H1 (cell line): ENCODE measurements at regions of chr14 and their contacts with region 1.

Region 1: GRCh38 chr14:67666750-67667449 is 7.5 kb downstream of the VTI1B start:
- DNase-seq: no peak
- H3K4me3 ChIP-seq: no peak overlapping the region
- H3K27ac ChIP-seq: no peak overlapping the region
- H3K4me1 ChIP-seq: no peaks in the 10 kb centered on the region
- H3K27me3 ChIP-seq: no peaks in the 10 kb centered on the region
- CTCF ChIP-seq: peak in 2 of 3 experiments; percentile 71; a peak in 3 of 4 replicates
- EP300 ChIP-seq: no peak
- POLR2A ChIP-seq: no peak
- RAD21 ChIP-seq: peak; percentile 81 to 82

Region 2: DNA sequence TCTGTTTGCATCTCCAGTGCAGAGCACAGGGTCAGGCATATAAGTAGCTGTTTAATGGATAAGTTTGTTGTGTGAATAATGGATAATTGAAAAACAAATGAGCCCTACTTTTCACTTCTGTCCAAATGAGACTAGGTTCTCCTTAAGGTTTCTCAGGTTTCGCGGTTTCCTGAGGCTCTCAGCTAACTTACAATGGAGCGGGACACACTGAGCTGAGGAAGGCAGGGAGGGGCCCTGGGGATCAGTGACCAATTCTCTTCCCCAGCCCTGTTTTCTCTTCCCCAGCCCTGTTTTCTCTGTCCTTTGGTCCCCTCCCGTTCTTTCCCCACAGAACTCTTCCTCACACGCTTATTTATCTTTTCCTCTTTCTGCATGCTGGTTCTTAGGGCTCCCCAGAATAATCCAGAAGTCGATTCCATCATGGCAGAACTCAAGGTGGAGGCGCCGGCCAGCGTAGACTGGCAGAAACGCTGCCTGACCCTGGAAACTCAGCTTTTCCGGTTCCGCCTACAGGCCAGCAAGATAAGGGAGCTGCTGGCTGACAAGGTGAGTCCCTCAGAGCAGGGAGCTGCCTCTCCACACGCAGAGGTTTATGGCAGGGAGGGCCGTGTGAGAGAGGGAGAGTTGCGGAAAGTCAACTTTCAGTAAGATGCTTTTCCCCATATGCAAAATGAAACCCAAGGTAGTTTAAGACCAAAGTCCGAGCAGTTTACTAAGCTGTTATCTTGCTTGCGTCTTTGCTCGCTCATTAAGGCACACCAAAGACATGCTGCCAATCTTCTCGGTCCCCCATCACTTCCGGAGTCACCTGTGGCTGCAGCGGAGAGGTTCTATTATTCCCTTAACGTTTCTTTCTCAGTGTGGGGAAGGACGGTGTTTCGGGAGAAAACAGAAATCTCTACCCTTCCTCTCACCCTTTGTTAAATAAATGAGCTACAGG is 125.2 kb before region 1 on chr14:
- CTCF ChIA-PET with region 1: no interaction called
- POLR2A ChIA-PET with region 1: no interaction called
- DNase-seq: peak in 1 of 2 experiments; percentile 69
- H3K4me3 ChIP-seq: peak overlapping the region; percentile 20 to 50 (median 30); a peak in 5 of 8 replicates
- H3K27ac ChIP-seq: peak overlapping the region; percentile 76
- H3K4me1 ChIP-seq: peaks cover 6 to 20% (median 13%) of the 10 kb centered on the region in 4 experiments
- H3K27me3 ChIP-seq: no peaks in the 10 kb centered on the region
- CTCF ChIP-seq: no peak
- EP300 ChIP-seq: no peak
- POLR2A ChIP-seq: peak; percentile 66 to 75
- RAD21 ChIP-seq: no peak

Region 3: DNA sequence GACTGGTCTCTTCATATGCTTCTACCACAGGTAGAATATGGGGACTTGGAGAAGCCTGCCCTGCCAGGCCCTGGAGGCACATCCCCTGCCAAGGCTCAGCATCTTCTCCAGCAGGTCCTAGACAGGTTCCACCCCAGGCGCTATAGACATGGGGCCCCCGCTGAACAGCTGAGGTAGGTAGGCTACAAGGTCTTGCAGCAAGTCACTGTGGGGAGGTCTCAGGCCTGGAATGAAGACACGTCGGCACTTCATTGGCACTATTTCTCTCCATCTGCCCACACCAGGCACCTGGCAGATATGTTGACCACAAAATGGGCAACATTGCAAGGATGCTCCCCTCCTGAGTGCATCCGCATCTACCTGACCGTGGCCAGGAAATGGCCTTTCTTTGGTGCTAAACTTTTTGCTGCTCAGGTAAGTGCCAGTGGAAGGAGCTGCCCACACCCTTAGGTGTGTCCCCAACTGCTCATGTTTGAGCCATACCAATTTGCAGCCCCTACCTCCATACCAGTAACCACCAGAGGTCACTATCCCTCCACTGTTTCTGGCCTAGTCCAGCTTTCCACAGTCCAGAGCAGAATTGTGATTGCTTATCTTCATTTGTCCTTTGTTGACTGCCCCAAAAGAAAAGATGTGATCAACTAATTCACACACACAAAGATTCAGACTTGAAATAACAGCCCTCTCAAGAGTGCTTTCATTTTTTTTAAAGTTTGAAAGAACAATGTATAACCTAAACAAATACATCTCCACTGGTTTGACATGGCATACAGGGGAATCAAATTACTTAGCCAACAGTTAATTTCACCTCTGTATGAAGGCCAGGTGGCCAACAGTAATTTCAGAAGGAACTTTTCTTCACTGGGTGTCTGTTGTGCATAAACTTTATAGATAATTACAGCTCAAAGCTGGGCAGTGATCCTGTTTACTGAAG is 82.9 kb before region 1 on chr14:
- CTCF ChIA-PET with region 1: interaction called, 142 read pairs
- POLR2A ChIA-PET with region 1: interaction called, 3 read pairs
- DNase-seq: no peak
- H3K4me3 ChIP-seq: no peak overlapping the region
- H3K27ac ChIP-seq: no peak overlapping the region
- H3K4me1 ChIP-seq: no peaks in the 10 kb centered on the region
- H3K27me3 ChIP-seq: no peaks in the 10 kb centered on the region
- CTCF ChIP-seq: peak; percentile 54 to 83 (median 80)
- EP300 ChIP-seq: no peak
- POLR2A ChIP-seq: no peak
- RAD21 ChIP-seq: peak; percentile 89 to 90

Region 4: DNA sequence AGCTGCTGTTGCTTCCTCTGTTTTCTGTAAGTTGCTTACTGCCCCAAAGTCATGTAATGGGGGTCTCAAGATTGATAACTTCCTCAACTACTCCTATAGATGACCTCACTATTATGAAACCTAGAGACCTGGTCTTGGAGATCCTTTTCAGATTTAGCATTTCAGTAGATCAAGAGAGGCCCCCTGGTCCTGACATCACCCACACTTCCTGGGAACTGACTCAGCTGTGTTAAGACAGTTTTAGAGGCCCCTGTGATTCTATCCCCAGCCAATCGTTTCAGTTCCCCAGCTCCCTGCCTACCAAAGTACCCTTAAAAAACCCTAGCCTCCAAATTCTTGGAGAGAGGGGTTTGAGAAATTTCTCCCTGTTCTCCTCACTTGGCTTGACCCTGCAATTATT is 56.4 kb before region 1 on chr14:
- CTCF ChIA-PET with region 1: interaction called, 11 read pairs
- POLR2A ChIA-PET with region 1: no interaction called
- DNase-seq: no peak
- H3K4me3 ChIP-seq: no peak overlapping the region
- H3K27ac ChIP-seq: no peak overlapping the region
- H3K4me1 ChIP-seq: peaks cover 0 to 8% (median 2%) of the 10 kb centered on the region in 4 experiments; a peak in 4 of 7 replicates
- H3K27me3 ChIP-seq: peaks cover 17 to 73% (median 55%) of the 10 kb centered on the region in 4 experiments
- CTCF ChIP-seq: no peak
- EP300 ChIP-seq: no peak
- POLR2A ChIP-seq: no peak
- RAD21 ChIP-seq: no peak

Region 5: DNA sequence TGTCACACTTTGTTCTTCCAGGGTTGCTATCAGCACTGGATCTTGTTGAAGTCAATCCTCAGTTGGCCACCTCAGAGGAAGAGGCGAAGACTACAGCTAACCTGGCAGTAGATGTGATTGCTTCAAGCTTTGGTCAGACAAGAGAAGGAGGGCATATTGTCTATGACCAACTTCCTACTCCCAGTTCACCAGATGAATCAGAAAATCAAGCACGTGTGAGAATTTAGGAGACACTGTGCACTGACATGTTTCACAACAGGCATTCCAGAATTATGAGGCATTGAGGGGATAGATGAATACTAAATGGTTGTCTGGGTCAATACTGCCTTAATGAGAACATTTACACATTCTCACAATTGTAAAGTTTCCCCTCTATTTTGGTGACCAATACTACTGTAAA is 16.2 kb before region 1 on chr14:
- CTCF ChIA-PET with region 1: interaction called, 15 read pairs
- POLR2A ChIA-PET with region 1: interaction called, 4 read pairs
- DNase-seq: no peak
- H3K4me3 ChIP-seq: no peak overlapping the region
- H3K27ac ChIP-seq: no peak overlapping the region
- H3K4me1 ChIP-seq: no peaks in the 10 kb centered on the region
- H3K27me3 ChIP-seq: no peaks in the 10 kb centered on the region
- CTCF ChIP-seq: no peak
- EP300 ChIP-seq: no peak
- POLR2A ChIP-seq: no peak
- RAD21 ChIP-seq: no peak